Activated T-helper 1 cell treated with anti-CD3 and anti-CD28 coated beads, Interleukin-12 subunit alpha, Interleukin-12 subunit beta, Interleukin-2, Interleukin-4 antibody, amounts not matched to agents 30 ng/mL and 10 ng/mL and 1 ng/mL, durations not matched to agents 14 hours and 24 hours and 36 hours (primary cell): ENCODE measurements at regions of chr12 and their contacts with region 1.

Region 1: GRCh38 chr12:31412292-31412801 is 86.4 kb upstream of the SINHCAF start:
- DNase-seq: no peak
- H3K4me3 Mint-ChIP-seq: no peak overlapping the region
- H3K27ac Mint-ChIP-seq: no peak overlapping the region
- H3K4me1 Mint-ChIP-seq: no peaks in the 10 kb centered on the region
- H3K27me3 Mint-ChIP-seq: no peaks in the 10 kb centered on the region

Region 2: DNA sequence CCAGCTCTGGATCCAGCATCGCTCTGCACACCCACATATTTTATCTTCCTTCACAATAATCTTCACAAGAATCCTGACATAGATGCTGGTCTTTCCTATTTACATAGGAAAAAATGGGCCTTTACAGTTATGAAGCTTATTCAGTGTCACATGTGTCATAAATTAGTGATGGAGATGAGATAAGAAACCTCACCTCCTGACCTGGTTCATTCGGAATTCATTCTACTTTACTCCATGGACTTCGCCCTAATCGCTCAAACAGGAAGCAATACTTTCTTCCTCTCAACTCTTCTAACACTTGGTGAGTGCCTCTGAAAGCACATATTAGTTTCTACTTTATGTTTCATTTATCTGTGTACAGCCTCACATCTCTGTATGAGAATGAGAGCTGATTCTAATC is 74.4 kb before region 1 on chr12:
- intact Hi-C with region 1: loop called (anchors 2 kb)
- DNase-seq: no peak
- H3K4me3 Mint-ChIP-seq: no peak overlapping the region
- H3K27ac Mint-ChIP-seq: no peak overlapping the region
- H3K4me1 Mint-ChIP-seq: peaks cover 4% of the 10 kb centered on the region
- H3K27me3 Mint-ChIP-seq: peaks cover 6% of the 10 kb centered on the region

Region 3: DNA sequence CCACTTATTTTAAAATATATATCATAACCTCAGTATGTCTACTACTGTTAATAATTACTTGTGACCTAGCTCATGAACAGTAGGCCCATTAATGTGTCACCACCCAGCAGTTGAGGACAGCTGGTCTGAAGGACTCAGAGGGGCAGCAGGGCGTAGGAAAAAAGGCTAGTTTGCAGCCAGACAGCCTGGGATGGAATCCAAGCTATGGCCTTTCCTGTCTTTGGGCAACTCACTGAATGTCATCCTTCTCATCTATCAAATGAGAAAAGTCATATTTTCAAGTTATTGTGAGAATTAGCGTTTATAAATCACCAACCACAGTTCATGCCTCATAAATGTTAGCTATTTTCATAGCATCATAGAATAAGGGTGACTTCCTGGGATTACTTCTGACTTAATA is 166.3 kb after region 1 on chr12:
- intact Hi-C with region 1: no loop called
- DNase-seq: no peak
- H3K4me3 Mint-ChIP-seq: no peak overlapping the region
- H3K27ac Mint-ChIP-seq: no peak overlapping the region
- H3K4me1 Mint-ChIP-seq: no peaks in the 10 kb centered on the region
- H3K27me3 Mint-ChIP-seq: peaks cover 14% of the 10 kb centered on the region